Endothelial cell of umbilical vein (primary cell): ENCODE measurements at regions of chr2 and their contacts with region 1.

Region 1: GRCh38 chr2:11129598-11130449 is 25.4 kb upstream of the SLC66A3 start:
- DNase-seq: no peak
- H3K4me3 ChIP-seq: no peak overlapping the region
- H3K27ac ChIP-seq: no peak overlapping the region
- H3K4me1 ChIP-seq: peaks cover 28% of the 10 kb centered on the region
- H3K27me3 ChIP-seq: peaks cover 0 to 1% of the 10 kb centered on the region in 2 experiments
- CTCF ChIP-seq: peak in 1 of 2 donors; percentile 20
- POLR2A ChIP-seq: no peak

Region 2: DNA sequence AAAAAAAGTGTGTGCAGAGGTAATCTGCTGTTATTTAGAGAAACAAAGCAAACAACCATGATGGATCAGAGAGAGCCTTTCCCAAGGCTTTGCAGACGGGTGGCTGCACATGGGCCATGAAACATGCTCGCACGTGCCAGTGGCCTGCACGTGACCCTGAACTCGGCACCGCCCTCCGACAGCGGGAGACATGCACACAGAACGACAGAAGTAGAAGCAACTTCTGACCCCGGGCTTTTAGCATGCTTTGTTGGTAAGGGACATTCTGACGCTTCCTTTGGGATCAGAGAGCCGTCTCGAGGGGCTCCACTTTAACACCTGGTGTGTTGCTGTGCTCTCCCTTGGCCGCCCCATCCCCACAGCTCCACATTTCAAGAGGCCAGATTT is 105.6 kb before region 1 on chr2:
- CTCF ChIA-PET with region 1: no interaction called
- POLR2A ChIA-PET with region 1: no interaction called
- dilution Hi-C with region 1: no loop called
- intact Hi-C with region 1: no loop called
- DNase-seq: no peak
- H3K4me3 ChIP-seq: no peak overlapping the region
- H3K27ac ChIP-seq: no peak overlapping the region
- H3K4me1 ChIP-seq: no peaks in the 10 kb centered on the region
- H3K27me3 ChIP-seq: no peaks in the 10 kb centered on the region
- CTCF ChIP-seq: no peak
- POLR2A ChIP-seq: no peak

Region 3: GRCh38 chr2:11154923-11155380 is 25.1 kb after region 1 on chr2:
- CTCF ChIA-PET with region 1: interaction called, 19 read pairs
- POLR2A ChIA-PET with region 1: no interaction called
- dilution Hi-C with region 1: no loop called
- intact Hi-C with region 1: loop called (anchors 1 kb)
- DNase-seq: peak; percentile 91
- H3K4me3 ChIP-seq: peak overlapping the region; percentile 50 to 62 (median 61)
- H3K27ac ChIP-seq: peak overlapping the region; percentile 90
- H3K4me1 ChIP-seq: peaks cover 11% of the 10 kb centered on the region
- H3K27me3 ChIP-seq: no peaks in the 10 kb centered on the region
- CTCF ChIP-seq: no peak
- POLR2A ChIP-seq: no peak

Region 4: GRCh38 chr2:11224887-11225286 is 95.1 kb after region 1 on chr2:
- CTCF ChIA-PET with region 1: interaction called, 26 read pairs
- POLR2A ChIA-PET with region 1: interaction called, 5 read pairs
- dilution Hi-C with region 1: no loop called
- intact Hi-C with region 1: no loop called
- DNase-seq: no peak
- H3K4me3 ChIP-seq: no peak overlapping the region
- H3K27ac ChIP-seq: no peak overlapping the region
- H3K4me1 ChIP-seq: peaks cover 9% of the 10 kb centered on the region
- H3K27me3 ChIP-seq: no peaks in the 10 kb centered on the region
- CTCF ChIP-seq: no peak
- POLR2A ChIP-seq: no peak

Region 5: DNA sequence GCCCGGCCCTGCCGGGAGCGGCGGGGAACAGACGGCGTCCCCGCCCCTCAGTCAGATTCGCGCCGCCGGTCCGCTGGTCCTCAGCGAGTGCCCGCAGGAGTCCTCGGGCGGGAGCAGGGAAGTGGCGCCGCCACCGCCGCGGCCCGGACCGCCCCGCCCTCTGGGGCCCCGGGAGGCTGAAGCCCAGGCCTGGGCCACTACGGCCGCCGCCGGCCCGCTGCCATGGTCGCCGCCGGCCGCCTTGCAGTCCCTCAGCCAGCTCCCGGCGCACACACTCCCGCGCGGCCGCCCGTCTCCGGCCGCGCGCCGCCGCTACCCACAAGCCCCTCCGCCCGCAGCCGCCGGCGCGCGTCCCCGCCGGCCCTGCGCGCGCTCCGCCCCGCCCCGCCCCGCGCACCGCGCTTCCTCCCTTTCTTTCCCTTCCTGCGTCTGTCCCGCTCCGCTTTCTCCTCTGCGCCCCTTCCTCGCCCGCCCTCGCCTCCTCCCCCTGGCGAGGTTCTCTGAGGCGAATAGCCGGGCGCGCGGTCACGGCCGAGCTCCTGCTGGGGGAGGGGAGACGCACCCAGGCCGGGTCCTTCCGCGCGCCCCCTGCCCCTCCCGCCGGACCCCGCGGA is 214.6 kb after region 1 on chr2 and contains the start of gene ROCK2:
- CTCF ChIA-PET with region 1: interaction called, 13 read pairs
- POLR2A ChIA-PET with region 1: interaction called, 3 read pairs
- dilution Hi-C with region 1: no loop called
- intact Hi-C with region 1: loop called (anchors 1 kb)
- DNase-seq: peak; percentile 82
- H3K4me3 ChIP-seq: peak within 1 kb of the TSS; percentile 79 to 94 (median 92)
- H3K27ac ChIP-seq: peak within 1 kb of the TSS; percentile 98
- H3K4me1 ChIP-seq: peaks cover 25% of the 10 kb centered on the region
- H3K27me3 ChIP-seq: no peaks in the 10 kb centered on the region
- CTCF ChIP-seq: no peak
- POLR2A ChIP-seq: peak; percentile 73
- total RNA-seq, gene ROCK2: 54.3 and 56.5 TPM in 2 replicates

Region 6: GRCh38 chr2:11411768-11412448 is 282.1 kb after region 1 on chr2:
- CTCF ChIA-PET with region 1: interaction called, 162 read pairs
- POLR2A ChIA-PET with region 1: no interaction called
- dilution Hi-C with region 1: no loop called
- intact Hi-C with region 1: loop called (anchors 1 kb)
- DNase-seq: peak; percentile 67
- H3K4me3 ChIP-seq: peak overlapping the region; percentile 16 to 70 (median 16)
- H3K27ac ChIP-seq: no peak overlapping the region
- H3K4me1 ChIP-seq: no peaks in the 10 kb centered on the region
- H3K27me3 ChIP-seq: no peaks in the 10 kb centered on the region
- CTCF ChIP-seq: peak; percentile 75 to 79
- POLR2A ChIP-seq: no peak

Region 7: DNA sequence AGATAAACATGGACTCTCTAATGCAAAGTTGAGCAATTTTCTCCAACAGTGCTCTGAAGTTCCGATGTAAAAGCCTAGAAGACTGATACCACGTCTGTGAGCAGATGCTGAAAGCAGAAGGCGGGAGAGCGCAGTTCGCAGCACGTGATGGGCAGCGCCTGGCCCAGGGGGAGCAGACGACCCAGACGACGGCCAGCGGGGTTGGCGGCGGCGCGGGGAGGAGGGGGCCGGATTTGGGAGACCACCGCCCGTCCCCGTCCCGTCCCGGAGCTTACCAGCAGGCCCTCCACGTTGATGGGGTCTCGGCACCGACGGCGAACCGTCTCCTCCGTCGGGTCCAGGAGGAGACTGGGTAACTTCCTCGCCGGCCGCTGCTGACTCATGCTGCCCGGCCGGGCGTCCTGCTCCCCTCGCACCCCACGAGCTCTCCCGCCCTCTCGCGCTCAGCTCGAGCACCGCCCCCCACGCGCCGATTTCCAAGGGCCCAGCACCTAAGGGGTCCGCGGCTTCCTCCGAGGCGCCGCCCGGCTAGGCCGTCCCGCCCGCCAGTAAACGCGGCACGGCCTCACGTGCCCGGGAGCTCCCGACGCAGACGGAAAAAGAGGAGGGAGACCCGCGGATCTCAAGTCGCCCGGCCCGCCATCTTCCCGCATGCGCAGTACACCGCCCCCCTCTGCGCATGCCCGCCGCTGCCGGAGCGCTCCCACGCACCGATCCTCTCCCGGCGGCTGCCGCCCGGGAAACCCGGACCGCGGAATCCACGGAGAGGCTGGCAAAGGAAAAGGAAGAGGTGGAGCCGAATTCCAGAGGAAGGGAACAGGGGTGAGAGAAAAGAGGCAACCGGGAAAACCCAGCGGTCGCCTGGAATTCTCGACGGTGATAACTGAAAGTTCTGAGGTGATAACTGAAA is 335.9 kb after region 1 on chr2 and contains the start of gene E2F6:
- CTCF ChIA-PET with region 1: interaction called, 26 read pairs
- POLR2A ChIA-PET with region 1: interaction called, 4 read pairs
- dilution Hi-C with region 1: no loop called
- intact Hi-C with region 1: no loop called
- DNase-seq: peak; percentile 93
- H3K4me3 ChIP-seq: peak within 1 kb of the TSS; percentile 45 to 82 (median 46)
- H3K27ac ChIP-seq: peak within 1 kb of the TSS; percentile 73
- H3K4me1 ChIP-seq: peaks cover 21% of the 10 kb centered on the region
- H3K27me3 ChIP-seq: no peaks in the 10 kb centered on the region
- CTCF ChIP-seq: no peak
- POLR2A ChIP-seq: no peak
- total RNA-seq, gene E2F6: 14.6 and 15.7 TPM in 2 replicates

Region 8: DNA sequence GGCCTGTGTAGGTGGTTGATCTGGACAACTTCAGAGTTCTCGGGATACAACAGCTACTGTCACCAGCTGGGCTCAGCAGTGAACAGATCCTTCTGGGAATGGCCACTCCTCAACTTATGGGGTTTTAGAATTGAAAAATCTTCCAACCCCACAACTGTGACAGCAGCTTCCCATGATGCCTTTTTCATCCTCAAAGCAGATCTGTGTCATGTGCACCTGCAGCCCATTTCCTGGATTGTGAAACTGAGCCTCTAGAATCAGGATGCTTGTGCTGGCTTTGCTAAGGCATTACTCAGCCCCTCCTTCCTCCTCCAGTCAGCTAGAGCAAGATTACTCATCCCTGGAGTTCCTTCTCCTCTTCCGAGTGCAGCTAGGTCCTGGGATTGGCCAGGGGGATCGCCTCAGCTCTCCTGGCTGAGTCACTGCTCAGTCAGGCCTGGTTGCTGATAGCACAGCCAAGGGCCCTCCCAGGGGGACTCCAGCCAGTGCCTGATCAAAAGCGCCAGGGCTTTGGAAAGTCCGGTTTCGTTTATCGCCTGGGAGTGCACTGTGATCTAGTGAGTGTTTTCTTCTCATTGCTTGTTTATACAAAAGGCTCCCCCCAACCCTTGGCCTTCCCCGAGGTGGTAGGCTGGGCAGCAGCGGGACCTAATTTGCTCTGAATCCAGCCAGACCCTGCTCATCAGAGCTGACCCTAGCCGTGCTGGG is 614.2 kb after region 1 on chr2:
- CTCF ChIA-PET with region 1: no interaction called
- POLR2A ChIA-PET with region 1: no interaction called
- dilution Hi-C with region 1: no loop called
- intact Hi-C with region 1: loop called (anchors 10 kb)
- DNase-seq: peak; percentile 99
- H3K4me3 ChIP-seq: peak overlapping the region in 1 of 3 experiments; percentile 20
- H3K27ac ChIP-seq: peak overlapping the region; percentile 82
- H3K4me1 ChIP-seq: peaks cover 55% of the 10 kb centered on the region
- H3K27me3 ChIP-seq: no peaks in the 10 kb centered on the region
- CTCF ChIP-seq: no peak
- POLR2A ChIP-seq: no peak